Astrocyte of the cerebellum (primary cell): ENCODE measurements at regions of chr7 and their contacts with region 1.

Region 1: GRCh38 chr7:143013893-143014292 is 13.0 kb downstream of the OR9A2 start:
- DNase-seq: peak; percentile 80
- H3K4me3 ChIP-seq: no peak overlapping the region
- CTCF ChIP-seq: no peak

Region 2: DNA sequence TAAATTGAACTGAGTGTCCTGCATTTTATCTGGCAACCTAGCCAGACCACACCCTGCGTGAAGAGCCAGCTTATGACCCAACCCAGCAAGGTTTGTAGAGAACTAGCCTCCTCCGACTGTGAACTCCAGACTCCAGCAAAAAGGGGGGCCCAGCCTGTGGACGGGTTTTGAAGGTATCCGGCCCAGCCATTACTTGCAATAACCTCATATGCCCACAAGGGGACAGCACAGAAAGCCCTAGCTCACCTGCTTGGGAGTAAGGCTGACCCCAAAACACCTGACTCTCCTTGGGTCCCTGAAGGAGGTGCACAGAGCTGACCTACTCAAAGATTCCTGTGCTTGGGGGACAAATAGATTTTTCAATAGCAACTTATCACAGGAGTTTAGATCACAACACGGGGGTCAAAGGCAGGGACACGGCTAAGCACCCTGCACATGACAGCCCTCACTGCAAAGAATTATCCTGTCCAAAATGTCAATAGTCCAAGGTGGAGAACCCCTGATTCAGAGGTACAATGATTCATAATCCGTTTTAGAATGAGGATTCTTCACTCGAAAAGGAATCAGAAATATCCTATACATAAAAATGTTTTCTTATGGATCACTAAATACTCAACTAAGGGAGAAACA is 132.9 kb before region 1 on chr7:
- in situ Hi-C with region 1: no loop called
- DNase-seq: no peak
- H3K4me3 ChIP-seq: no peak overlapping the region
- CTCF ChIP-seq: peak; percentile 79

Region 3: DNA sequence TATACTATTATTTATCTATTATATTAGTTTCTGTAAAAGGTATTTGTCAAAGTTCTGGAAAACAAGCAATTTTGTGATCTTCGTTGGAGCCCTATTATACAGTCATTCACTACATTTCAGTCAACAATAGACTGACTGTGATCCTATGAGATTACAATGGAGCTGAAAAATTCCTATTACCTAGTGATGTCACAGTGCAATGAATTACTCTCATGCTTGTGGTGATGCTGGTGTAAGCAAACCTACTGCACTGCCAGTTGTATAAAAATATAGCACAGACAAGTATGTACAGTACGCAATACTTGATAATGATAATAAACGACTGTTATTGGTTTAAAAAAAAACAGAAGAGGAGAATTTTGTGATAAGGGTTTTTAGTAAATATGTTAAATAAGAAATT is 59.7 kb after region 1 on chr7:
- in situ Hi-C with region 1: no loop called
- DNase-seq: no peak
- H3K4me3 ChIP-seq: no peak overlapping the region
- CTCF ChIP-seq: no peak

Region 4: GRCh38 chr7:143214789-143215679 is 201.1 kb after region 1 on chr7:
- in situ Hi-C with region 1: loop called (anchors 5 kb)
- DNase-seq: peak; percentile 81
- H3K4me3 ChIP-seq: no peak overlapping the region
- CTCF ChIP-seq: peak; percentile 99